ENCODE measurements at regions of chr13 and their contacts with region 1.

Region 1: GRCh38 chr13:28658796-28659620 is at the start of gene POMP:
- DNase-seq: peak; percentile 90
- H3K4me3 Mint-ChIP-seq: peak within 1 kb of the TSS; percentile 97
- H3K27ac Mint-ChIP-seq: peak within 1 kb of the TSS; percentile 97
- H3K4me1 Mint-ChIP-seq: peaks cover 59% of the 10 kb centered on the region
- H3K27me3 Mint-ChIP-seq: no peaks in the 10 kb centered on the region
- total RNA-seq, gene POMP: 147 TPM in 2 replicates

Region 2: GRCh38 chr13:27449936-27450828 is 1208.8 kb before region 1 on chr13 and contains the start of gene MTIF3:
- intact Hi-C with region 1: loop called (anchors 10 kb)
- DNase-seq: peak; percentile 95
- H3K4me3 Mint-ChIP-seq: peak within 1 kb of the TSS; percentile 91
- H3K27ac Mint-ChIP-seq: peak within 1 kb of the TSS; percentile 93
- H3K4me1 Mint-ChIP-seq: peaks cover 58% of the 10 kb centered on the region
- H3K27me3 Mint-ChIP-seq: no peaks in the 10 kb centered on the region
- total RNA-seq, gene MTIF3: 30.4 and 36.0 TPM in 2 replicates

Region 3: GRCh38 chr13:27988520-27988919 is 670.5 kb before region 1 on chr13 and contains the start of gene URAD:
- intact Hi-C with region 1: no loop called
- DNase-seq: no peak
- H3K4me3 Mint-ChIP-seq: no peak within 1 kb of the TSS
- H3K27ac Mint-ChIP-seq: no peak within 1 kb of the TSS
- H3K4me1 Mint-ChIP-seq: no peaks in the 10 kb centered on the region
- H3K27me3 Mint-ChIP-seq: peaks cover 4% of the 10 kb centered on the region
- total RNA-seq, gene URAD: not detected in 2 replicates

Region 4: GRCh38 chr13:28035139-28035782 is 623.7 kb before region 1 on chr13:
- intact Hi-C with region 1: no loop called
- DNase-seq: no peak
- H3K4me3 Mint-ChIP-seq: no peak overlapping the region
- H3K27ac Mint-ChIP-seq: no peak overlapping the region
- H3K4me1 Mint-ChIP-seq: no peaks in the 10 kb centered on the region
- H3K27me3 Mint-ChIP-seq: peaks cover 13% of the 10 kb centered on the region

Region 5: DNA sequence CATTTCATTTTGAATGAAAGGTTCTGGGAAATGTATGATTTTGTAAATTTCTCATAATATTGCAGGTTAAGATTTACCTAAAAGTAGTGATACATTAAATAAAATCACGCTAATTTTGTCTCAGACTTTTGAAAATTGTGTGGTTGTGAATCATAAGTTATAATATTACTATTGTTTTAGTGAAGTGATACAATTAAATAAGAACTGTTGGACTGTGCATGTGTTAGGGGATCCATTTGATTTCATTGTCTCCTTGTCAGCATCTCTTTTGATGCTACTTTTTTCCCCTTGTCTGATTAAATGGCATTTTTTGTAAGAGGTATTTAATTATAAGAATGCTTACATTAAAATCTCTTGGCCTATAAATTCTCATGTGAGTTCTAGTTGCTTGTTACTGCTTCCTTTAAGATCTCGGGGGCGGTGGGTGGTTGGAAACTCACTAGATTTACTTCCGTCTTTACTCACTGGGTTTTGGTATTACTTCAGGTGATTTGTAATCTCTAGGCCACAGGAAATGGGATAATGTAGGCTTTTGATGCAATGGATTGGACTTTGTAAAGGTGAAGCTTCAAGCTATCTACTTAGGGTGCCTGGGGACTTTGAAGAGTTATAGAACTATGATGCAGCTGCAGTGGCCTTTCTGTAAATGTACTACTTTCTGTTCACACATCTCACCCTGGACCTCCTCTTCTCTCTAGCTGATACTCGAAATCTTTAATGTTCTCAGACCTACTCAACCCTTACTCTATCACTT is 454.1 kb before region 1 on chr13:
- intact Hi-C with region 1: loop called (anchors 10 kb)
- DNase-seq: no peak
- H3K4me3 Mint-ChIP-seq: peak overlapping the region; percentile 43
- H3K27ac Mint-ChIP-seq: peak overlapping the region; percentile 54
- H3K4me1 Mint-ChIP-seq: peaks cover 26% of the 10 kb centered on the region
- H3K27me3 Mint-ChIP-seq: no peaks in the 10 kb centered on the region

Region 6: DNA sequence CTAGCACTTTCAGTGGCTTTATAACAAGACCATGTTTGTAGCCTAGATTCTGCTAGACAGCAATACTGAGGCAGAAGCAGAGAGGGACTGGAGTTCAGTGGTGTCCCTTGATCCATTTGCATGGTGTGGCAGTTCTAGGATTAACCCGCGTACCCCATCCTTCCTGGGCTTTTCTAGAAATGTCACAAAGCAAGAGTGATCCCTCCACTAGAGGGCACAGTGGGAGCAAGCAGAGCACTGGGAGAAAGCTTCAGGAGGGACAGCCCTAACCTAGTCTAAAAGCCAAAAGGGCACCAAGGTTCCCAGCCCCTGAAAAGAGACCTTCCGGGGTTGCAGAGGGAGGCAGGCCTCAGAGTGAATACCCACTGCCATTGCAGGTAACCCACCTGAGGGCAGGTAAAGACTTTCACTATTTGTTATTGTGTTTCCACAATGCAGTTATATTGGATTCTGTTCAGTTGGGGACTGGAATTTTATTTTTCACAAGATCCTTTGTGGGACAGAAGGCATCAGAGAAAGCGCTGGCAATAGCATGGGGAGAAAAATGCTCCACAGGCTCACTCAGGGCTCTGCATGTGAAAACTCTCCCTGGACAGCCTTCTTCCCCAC is 334.7 kb before region 1 on chr13:
- intact Hi-C with region 1: loop called (anchors 2 kb)
- DNase-seq: peak; percentile 36
- H3K4me3 Mint-ChIP-seq: no peak overlapping the region
- H3K27ac Mint-ChIP-seq: no peak overlapping the region
- H3K4me1 Mint-ChIP-seq: no peaks in the 10 kb centered on the region
- H3K27me3 Mint-ChIP-seq: peaks cover 3% of the 10 kb centered on the region

Region 7: GRCh38 chr13:28540612-28541011 is 118.4 kb before region 1 on chr13:
- intact Hi-C with region 1: loop called (anchors 1 kb)
- DNase-seq: no peak
- H3K4me3 Mint-ChIP-seq: no peak overlapping the region
- H3K27ac Mint-ChIP-seq: peak overlapping the region; percentile 84
- H3K4me1 Mint-ChIP-seq: peaks cover 32% of the 10 kb centered on the region
- H3K27me3 Mint-ChIP-seq: no peaks in the 10 kb centered on the region

Region 8: DNA sequence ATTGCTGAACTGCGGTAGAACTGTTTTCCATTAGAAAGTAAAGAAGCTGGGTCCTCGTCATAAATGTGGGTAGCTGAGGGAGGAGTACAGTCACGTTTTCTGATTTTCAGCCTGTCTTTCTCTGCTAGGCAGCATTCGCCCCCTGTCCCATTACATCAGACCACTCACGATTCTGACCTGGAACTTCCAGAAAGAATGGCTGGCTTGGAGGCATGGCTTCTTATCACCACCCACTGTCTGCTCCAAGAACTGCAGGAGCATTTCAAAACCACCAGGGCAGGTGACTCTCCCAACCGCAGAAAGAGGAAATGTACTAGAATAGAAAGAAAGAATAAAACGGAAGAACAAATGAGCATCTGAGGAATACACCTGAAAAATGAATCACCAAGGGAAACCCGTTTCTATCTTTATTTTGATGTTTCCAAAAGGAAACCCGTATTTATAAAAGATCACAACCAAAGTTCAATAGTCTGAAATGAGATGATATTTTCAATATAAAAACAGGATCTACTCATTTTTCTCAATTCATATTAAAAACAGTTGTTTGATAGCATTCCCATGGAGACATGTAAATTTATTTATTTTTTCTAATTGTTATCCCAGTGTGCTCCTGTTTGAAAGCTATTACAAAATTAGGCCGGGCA is 22.2 kb before region 1 on chr13:
- intact Hi-C with region 1: loop called (anchors 1 kb)
- DNase-seq: peak; percentile 37
- H3K4me3 Mint-ChIP-seq: peak overlapping the region; percentile 1
- H3K27ac Mint-ChIP-seq: peak overlapping the region; percentile 15
- H3K4me1 Mint-ChIP-seq: peaks cover 9% of the 10 kb centered on the region
- H3K27me3 Mint-ChIP-seq: peaks cover 29% of the 10 kb centered on the region

Region 9: GRCh38 chr13:28718543-28719226 is 59.7 kb after region 1 on chr13 and contains the start of gene SLC46A3:
- intact Hi-C with region 1: loop called (anchors 1 kb)
- DNase-seq: peak; percentile 95
- H3K4me3 Mint-ChIP-seq: peak within 1 kb of the TSS; percentile 85
- H3K27ac Mint-ChIP-seq: peak within 1 kb of the TSS; percentile 82
- H3K4me1 Mint-ChIP-seq: peaks cover 32% of the 10 kb centered on the region
- H3K27me3 Mint-ChIP-seq: peaks cover 4% of the 10 kb centered on the region
- total RNA-seq, gene SLC46A3: 2.7 and 3.8 TPM in 2 replicates